ENCODE measurements at regions of chr1 and their contacts with region 1.

Region 1: DNA sequence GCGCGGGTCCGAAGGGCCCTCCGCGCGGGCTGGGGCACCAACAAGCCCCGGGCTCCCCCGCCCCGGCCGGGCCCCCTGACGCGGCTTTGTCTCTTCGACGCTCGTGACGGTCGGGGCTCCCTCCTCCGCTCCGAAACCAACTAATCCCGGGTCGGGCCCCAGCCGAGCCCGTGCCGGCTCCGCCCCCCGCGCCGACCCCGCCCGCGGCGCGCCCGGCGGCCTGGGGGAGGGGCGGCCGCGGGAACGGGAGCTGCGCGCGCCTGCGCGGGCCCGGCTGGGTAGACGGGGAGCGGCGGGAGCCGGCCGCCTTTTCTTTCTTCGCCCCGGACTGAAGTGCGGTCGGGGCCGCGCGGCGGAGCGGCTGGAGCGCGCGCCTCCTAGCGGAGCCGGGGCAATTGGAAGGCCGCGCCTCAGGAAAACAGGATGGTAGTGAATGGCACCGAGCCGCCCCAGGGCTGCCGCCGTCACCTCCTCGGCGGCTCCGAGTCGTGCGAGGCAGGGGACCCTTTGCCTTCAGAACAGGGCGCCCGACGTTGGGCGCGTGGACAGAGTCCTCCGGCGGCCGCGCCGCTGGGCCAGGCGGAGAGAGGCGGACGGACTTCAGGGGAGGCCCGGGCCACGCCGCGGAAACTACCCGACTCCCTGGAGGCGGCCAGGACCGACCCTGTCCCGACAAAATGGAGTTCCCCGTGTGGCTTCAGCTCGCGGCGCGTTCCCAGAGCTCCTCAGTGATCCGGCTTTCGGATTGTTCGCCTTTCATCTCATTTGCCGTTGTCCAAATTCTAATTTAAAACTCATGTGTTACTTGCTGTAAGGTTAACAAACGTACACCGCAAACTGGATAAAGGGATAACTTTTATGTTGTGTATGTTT is at the start of gene TP53BP2:
- DNase-seq: peak; percentile 73 to 98 (median 80)

Region 2: DNA sequence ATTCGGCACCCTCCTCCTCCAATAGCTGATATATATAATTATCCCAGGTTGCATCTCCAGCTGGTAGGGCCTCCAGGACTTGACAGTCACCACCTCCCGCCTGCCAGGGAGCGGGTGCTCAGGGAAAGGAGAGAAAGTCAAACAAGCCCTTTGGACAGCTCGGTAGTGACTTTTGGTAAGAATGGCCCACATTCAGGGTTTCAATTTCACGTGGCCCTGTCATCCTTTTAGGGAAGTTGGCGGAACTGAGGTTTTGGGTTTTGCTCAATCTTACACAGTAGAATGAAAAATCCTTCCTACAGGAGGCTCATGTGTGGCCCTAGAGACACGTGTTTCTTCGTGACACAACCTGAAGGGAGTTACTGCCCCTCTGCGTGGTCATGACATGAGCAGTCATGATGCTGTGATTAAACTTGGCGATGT is 224.7 kb before region 1 on chr1:
- intact Hi-C with region 1: no loop called
- DNase-seq: no peak

Region 3: DNA sequence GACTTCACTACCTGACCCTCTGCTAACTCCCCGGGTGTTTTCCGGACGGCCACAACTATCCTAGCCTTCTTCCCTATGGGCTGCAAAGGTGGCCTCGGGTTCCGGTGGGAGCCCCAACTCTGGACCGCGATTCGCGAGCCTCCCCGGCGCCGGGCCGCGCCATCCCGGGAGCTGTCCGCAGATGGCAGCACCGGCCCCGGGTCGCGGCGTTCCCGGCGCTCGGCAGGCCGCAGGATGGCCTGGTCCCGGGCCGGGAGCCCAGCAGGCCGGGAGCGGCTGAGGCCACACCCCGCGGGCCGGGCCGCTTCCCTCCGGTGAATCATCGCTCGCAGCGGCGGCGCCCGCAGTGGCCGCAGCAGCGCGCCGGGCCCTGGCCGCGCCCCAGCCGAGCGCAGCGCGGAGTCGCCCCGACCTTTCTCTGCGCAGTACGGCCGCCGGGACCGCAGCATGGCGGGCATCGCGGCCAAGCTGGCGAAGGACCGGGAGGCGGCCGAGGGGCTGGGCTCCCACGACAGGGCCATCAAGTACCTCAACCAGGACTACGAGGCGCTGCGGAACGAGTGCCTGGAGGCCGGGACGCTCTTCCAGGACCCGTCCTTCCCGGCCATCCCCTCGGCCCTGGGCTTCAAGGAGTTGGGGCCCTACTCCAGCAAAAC is 133.7 kb before region 1 on chr1 and contains the start of gene CAPN2:
- intact Hi-C with region 1: loop called (anchors 2 kb)
- DNase-seq: peak; percentile 53 to 96 (median 70)

Region 4: DNA sequence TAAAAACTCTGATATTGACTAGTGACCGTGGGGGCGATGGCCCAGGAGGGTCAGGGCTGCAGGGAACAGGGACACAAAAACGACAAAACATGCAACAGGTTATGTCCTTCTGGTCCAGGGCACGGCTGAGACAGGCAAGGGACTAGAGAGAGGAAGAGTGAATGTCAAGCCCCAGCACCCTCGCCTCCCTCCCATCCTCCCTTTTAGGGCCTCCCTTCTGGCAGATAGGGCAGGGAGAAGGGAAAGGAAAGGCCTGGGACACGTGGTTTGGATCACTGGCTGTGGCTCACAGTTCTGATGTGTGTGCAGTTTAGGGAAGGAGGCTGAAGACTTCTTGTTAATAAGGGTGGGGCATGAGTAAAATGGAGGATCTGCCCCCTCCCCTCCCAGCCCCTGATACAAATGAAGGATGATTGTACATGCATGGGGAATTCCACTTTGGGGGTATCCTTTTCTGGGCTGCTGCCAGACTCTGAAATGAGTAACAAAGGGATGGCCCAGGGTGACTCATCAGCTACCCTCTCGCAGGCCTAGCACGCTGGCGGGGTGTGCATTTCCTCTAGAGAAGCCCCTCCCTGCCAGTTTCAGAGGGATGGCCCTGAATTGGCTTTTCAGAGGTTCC is 119.6 kb before region 1 on chr1:
- intact Hi-C with region 1: no loop called
- DNase-seq: peak in 4 of 10 donors; percentile 47 to 87 (median 63)

Region 5: DNA sequence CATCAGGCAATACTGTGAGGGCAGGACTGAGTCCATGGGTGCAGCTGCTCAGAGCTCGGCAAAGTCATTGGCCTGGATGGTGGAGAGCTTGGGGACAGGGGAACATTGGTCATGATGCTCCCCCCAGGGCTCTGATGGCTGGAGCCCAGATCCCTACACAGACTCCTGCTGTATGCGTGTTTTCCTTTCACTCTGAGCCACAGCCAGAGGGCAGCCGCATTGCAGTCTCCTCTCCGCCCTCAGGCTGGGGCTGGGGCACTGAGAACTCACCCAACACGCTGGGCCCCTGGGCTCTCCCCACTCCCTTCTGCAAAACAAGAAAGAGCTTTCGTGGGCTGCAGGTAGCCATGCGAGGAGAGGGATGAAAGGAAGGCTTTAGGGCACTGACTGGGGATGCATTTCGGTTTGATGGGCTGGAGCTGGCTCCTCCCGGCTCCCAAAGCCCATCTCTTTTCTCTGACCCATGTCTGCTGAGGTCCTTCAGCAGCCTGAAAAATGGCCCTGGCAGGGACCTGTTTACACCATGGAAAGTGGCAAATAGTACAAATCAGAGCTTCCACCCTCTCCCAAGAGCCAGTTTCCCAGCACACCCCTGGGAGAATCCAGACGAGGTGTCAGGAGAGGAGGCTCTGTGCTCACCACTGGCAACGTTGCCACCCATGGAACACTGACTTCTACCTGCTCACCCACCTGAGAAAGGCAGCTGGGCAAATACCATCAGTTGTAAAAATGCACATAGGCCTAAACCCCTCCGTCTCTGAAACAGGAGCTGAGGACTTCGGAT is 89.9 kb before region 1 on chr1:
- intact Hi-C with region 1: loop called (anchors 10 kb)
- DNase-seq: peak; percentile 48 to 97 (median 74)

Region 6: GRCh38 chr1:223794136-223794880 is 51.7 kb before region 1 on chr1:
- intact Hi-C with region 1: no loop called
- DNase-seq: no peak

Region 7: DNA sequence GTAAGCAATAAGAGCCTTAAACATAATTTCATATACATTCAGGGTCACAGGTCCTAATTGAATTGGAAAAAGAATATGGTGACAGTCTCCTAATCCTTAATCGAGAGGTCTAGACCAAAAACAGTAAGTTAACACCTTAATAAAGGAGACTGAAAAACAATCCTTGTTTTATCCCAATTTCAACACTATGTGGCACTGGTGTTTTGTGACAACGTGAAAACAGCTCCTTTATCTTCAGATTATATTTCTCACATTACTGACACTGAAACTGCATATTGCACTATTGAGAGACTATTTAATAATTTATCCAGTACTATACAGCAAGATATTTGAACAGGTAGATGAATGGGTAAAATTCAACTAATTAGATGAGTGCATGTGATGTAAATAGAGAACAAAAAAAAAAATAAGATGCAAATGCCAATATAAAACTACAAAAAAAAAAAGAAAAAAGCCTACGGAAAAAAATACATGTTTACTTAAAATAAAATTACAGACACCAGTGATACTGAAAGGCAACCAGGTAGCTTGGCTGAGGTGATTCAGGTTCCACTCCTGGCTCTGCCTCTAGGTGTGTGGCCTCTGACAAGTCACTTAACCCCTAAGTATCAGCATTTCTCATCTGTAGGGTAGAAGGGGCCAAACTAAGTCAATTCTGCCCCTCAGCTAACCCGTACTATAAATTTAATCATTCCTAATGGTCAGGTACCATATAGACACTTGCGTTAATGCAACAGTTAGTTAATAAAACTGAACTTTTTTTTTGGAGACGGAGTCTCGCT is 34.2 kb before region 1 on chr1:
- intact Hi-C with region 1: loop called (anchors 5 kb)
- DNase-seq: no peak

Region 8: DNA sequence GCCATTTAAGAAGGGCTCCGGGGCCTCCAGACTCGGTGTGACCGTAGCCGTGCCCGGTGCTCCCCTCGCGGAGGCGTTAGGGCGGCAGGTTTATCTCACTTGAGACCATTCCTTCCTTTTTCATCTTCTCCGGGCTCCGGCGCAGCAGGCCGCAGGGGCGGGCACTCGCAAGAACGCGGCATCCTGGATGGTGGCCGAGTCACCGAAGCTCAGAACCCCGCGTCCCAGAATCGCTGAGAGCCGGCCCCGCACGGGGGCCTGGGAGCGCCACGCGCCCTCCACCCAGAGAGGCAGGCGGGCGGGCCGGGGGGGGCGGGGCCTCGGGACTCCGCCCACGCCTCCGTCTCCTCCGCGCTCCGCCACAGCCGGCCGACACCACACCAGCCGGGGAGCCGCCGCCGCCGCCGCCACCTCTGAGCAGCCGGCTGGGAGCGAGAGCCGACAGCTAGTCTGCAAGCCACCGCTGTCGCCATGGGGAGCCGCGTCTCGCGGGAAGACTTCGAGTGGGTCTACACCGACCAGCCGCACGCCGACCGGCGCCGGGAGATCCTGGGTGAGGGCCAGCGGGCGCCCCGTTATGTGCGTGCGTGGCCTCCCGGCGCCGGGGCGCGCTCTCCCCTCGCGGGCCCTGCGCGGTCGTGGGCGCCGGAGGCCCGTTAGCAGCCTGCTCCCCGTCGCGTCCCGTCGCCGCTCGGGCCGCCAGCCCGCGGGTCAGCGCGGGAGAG is 337.0 kb after region 1 on chr1 and contains the start of gene DEGS1:
- intact Hi-C with region 1: loop called (anchors 10 kb)
- DNase-seq: peak; percentile 73 to 97 (median 82)